Activated CD4-positive, alpha-beta memory T cell treated with anti-CD3 and anti-CD28 coated beads, Interleukin-2, amount 10 ng/mL, durations not matched to agents 7 days and 5 days (primary cell): ENCODE measurements at regions of chr1 and their contacts with region 1.

Region 1: DNA sequence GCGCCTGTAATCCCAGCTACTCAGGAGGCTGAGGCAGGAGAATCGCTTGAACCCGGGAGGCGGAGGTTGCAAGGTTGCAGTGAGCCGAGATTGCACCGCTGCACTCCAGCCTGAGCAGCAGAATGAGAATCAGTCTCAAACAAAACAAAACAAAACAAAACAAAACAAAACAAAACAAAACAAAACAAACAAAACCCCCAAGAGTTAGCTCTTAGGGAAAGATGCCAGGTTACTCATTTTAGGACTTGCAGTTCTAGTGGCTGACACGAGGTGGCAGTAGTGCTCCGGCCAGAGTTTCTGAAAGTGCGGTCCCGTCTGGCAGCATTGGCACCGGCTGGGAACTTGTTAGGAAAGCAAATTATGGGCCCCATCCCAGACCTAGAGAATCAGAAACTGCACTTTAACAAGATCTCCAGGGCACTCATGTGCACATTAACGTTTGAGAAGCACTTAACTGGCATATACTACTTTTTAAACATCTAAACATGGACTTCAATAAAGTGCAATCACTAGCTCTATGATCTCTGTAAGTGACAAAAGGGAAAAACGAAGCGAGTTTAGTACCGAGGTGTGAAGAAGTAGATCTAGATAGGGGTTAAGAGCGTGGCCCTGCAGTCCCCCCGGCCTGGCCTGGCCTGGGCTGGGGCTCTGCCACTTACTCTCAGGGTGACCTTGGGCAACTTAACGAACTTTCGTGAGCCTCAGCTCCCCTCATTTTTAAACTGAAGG is 41.9 kb upstream of the TNFRSF1B start:
- DNase-seq: peak; percentile 82
- H3K4me3 Mint-ChIP-seq: no peak overlapping the region
- H3K27ac Mint-ChIP-seq: peak overlapping the region; percentile 61
- H3K4me1 Mint-ChIP-seq: peaks cover 28% of the 10 kb centered on the region
- H3K27me3 Mint-ChIP-seq: no peaks in the 10 kb centered on the region

Region 2: DNA sequence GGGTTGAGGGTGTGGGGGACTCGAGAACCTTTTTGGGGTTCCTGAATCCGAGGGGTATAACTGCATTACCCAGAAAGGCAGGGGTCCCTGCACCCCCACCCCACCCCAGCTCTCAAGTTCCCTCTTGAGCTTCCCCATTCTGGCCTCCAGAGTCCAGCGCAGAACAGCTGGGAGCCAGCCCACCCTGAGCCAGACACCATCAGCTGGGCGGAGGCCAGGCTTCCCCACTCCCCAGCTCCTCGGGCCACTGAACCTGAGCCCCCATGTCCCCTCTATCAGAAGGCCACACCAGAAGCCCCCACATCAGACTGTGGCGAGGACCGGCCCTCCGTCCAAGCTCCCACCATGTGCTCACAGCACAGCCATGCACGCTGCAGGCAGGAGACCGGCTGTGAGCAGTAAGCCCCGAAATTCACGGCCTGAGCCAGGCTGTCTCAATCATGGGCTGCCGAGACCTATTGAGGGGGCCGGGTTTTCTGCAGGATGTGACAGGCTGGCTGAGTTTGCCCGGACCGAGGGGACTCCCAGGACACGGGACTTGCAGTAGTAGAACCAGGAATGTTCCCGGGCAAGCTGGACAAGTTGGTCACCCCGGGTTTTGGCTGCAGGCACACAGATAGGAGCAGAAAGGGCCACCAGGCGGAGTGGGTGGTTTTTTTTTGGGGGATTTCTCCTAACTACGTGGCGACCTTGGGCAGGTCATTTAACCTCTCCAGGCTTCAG is 16.4 kb after region 1 on chr1:
- CTCF ChIA-PET with region 1: interaction called, 10 read pairs
- POLR2A ChIA-PET with region 1: no interaction called
- DNase-seq: no peak
- H3K4me3 Mint-ChIP-seq: no peak overlapping the region
- H3K27ac Mint-ChIP-seq: no peak overlapping the region
- H3K4me1 Mint-ChIP-seq: peaks cover 33% of the 10 kb centered on the region
- H3K27me3 Mint-ChIP-seq: no peaks in the 10 kb centered on the region

Region 3: DNA sequence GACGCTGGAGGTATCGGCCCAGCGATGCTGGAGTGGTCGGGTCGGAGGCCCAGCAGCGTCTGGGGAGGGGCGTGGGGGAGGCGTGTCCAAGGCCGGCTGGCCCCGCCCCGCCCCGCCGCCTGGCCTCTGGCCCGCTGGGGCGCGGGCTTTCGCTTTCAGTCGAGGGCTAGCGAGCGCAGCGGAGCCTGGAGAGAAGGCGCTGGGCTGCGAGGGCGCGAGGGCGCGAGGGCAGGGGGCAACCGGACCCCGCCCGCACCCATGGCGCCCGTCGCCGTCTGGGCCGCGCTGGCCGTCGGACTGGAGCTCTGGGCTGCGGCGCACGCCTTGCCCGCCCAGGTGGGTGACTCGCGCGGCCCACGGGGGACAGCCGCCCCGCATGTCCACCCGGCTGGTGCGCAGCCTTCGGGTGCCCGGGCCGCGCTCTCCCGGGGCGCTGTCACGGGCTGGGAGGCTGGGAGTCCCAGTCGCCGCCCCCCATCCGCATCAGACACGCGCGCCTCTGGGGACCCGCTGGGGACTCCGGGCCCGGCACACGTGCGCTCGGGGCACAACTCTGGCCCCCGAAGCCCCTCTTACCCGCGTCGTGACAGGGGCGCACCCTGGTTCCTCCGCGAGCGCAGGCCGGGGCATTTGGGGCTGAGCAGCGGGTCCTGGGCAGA is 42.1 kb after region 1 on chr1 and contains the start of gene TNFRSF1B:
- CTCF ChIA-PET with region 1: interaction called, 23 read pairs
- POLR2A ChIA-PET with region 1: interaction called, 31 read pairs
- DNase-seq: peak; percentile 80
- H3K4me3 Mint-ChIP-seq: peak within 1 kb of the TSS; percentile 100
- H3K27ac Mint-ChIP-seq: peak within 1 kb of the TSS; percentile 98
- H3K4me1 Mint-ChIP-seq: peaks cover 77% of the 10 kb centered on the region
- H3K27me3 Mint-ChIP-seq: no peaks in the 10 kb centered on the region
- total RNA-seq, gene TNFRSF1B: 434 to 447 TPM

Region 4: GRCh38 chr1:12208764-12209494 is 84.1 kb after region 1 on chr1:
- CTCF ChIA-PET with region 1: interaction called, 172 read pairs
- POLR2A ChIA-PET with region 1: interaction called, 57 read pairs
- DNase-seq: peak; percentile 85
- H3K4me3 Mint-ChIP-seq: peak overlapping the region; percentile 20
- H3K27ac Mint-ChIP-seq: peak overlapping the region; percentile 68
- H3K4me1 Mint-ChIP-seq: peaks cover 66% of the 10 kb centered on the region
- H3K27me3 Mint-ChIP-seq: peaks cover 5% of the 10 kb centered on the region

Region 5: DNA sequence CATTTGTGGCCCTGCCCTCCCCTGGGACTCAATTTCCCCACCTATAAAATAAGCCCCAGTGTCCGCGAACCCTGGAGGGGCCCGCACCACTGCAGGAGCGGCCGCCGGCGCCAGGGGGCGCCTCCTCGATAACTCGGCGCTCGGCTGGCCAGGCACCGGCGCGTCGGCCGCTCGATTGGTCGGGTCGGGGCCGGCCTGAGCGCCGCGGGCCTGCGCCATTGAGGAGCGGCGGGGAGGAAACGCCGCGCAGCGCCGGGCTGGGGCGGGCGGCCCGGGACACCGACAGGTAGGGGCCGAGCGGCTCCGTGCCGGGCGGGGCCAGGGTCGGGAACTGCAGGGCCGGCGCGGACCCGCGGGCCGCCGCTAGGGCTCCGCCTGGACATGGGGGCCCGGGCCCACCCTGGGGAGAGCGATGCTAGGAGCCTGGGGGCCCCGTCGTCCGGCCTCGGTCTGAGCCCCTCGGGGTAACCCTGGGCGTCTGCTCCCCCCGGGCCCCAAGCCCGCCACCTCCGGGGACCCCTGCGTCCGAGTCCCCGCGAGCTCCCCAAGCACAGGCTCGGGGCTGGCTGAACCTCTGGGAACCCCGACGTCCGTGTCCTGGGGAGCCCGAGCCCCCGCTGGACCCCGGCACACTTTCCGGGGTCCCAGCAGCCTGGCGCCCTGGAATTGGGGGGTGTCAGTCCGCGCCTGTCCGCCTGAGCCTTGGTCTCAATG is 105.1 kb after region 1 on chr1 and contains the start of gene VPS13D:
- CTCF ChIA-PET with region 1: interaction called, 35 read pairs
- POLR2A ChIA-PET with region 1: interaction called, 5 read pairs
- DNase-seq: peak; percentile 87
- H3K4me3 Mint-ChIP-seq: peak within 1 kb of the TSS; percentile 83
- H3K27ac Mint-ChIP-seq: peak within 1 kb of the TSS; percentile 44
- H3K4me1 Mint-ChIP-seq: peaks cover 11% of the 10 kb centered on the region
- H3K27me3 Mint-ChIP-seq: peaks cover 7% of the 10 kb centered on the region
- total RNA-seq, gene VPS13D: 28.1 to 31.4 TPM

Region 6: DNA sequence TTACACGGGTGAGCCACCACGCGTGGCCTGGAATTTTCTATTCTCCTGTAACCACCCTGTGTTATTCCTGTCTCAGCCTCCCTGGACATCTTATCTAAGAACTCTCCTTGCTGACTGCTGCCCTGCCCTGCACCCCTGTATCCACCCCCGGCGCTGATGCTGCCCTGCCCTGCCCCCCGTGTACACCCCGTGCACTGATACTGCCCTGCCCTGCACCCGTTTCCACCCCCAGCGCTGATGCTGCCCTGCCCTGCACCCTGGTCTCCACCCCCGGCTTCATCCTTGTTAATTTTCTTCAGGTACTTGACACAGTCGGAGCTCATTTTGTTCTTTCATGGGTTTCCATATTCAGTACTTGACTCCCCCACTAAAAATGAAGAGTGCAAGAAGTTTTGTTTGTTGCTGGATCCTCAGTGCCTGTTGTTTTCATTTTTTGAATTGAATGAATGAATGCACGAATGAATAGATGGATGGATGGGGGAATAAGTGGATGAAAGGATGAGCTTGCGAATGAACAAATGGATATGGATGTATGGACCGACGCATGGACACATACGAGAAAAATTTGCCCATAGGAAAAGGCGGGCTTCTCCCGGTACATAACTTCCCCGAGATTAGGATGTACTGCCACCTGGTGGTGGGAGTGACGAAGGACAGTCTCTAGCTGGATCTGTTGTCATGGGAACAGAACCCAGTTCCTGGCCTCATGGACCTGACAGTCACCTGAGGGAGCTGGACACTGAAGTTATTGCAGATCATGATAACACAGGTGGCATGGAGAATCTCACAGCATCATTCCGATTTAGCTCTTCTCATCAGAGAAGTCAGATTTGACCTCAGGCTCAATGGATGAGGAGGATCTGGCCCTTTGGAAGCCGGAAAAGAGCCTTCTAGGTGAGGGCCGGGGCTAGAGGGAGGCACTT is 533.9 kb after region 1 on chr1:
- CTCF ChIA-PET with region 1: interaction called, 12 read pairs
- POLR2A ChIA-PET with region 1: no interaction called
- DNase-seq: peak; percentile 72
- H3K4me3 Mint-ChIP-seq: peak overlapping the region; percentile 25
- H3K27ac Mint-ChIP-seq: no peak overlapping the region
- H3K4me1 Mint-ChIP-seq: peaks cover 11% of the 10 kb centered on the region
- H3K27me3 Mint-ChIP-seq: peaks cover 13% of the 10 kb centered on the region